ENCODE measurements at regions of chr10 and their contacts with region 1.

Region 1: GRCh38 chr10:29535012-29535777 is 99.6 kb downstream of the SVIL start:
- DNase-seq: peak; percentile 69
- H3K4me3 ChIP-seq: peak overlapping the region; percentile 40
- CTCF ChIP-seq: peak; percentile 86

Region 2: DNA sequence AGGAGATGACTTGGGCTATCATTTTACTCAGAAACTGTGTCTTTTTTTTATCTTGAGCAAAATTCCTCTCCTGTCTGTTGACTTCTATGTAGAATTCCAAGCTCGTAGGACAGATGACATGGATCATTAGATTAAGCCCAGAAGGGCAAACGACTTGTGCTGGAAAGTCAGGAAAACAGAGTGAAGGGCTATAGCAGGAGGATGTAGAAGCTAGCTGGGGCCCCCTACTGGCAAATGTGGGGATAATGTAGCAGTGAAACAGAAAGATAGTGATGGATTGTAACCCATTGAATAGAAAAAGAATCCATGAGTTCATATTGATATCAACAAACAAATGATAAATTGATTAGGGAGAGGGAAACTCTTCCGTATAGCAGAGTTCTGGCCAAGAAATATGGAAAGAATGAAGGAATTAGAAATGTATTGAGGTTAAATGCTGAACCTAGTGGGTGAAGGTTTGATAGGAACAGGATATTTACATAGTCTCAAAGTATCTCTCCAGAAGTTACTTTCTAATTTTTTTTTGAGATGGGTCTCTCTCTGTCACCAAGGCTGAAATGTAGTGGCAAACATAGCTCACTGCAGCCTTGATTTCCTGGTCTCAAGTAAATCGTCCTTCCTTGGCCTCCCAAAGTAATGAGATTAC is 142.7 kb before region 1 on chr10:
- CTCF ChIA-PET with region 1: no interaction called
- POLR2A ChIA-PET with region 1: no interaction called
- DNase-seq: no peak
- H3K4me3 ChIP-seq: no peak overlapping the region
- CTCF ChIP-seq: peak; percentile 65

Region 3: GRCh38 chr10:29508554-29509244 is 26.5 kb before region 1 on chr10:
- CTCF ChIA-PET with region 1: interaction called, 45 read pairs
- POLR2A ChIA-PET with region 1: no interaction called
- DNase-seq: no peak
- H3K4me3 ChIP-seq: no peak overlapping the region
- CTCF ChIP-seq: no peak

Region 4: GRCh38 chr10:29517352-29517923 is 17.8 kb before region 1 on chr10:
- CTCF ChIA-PET with region 1: interaction called, 58 read pairs
- POLR2A ChIA-PET with region 1: no interaction called
- DNase-seq: no peak
- H3K4me3 ChIP-seq: no peak overlapping the region
- CTCF ChIP-seq: peak; percentile 52

Region 5: DNA sequence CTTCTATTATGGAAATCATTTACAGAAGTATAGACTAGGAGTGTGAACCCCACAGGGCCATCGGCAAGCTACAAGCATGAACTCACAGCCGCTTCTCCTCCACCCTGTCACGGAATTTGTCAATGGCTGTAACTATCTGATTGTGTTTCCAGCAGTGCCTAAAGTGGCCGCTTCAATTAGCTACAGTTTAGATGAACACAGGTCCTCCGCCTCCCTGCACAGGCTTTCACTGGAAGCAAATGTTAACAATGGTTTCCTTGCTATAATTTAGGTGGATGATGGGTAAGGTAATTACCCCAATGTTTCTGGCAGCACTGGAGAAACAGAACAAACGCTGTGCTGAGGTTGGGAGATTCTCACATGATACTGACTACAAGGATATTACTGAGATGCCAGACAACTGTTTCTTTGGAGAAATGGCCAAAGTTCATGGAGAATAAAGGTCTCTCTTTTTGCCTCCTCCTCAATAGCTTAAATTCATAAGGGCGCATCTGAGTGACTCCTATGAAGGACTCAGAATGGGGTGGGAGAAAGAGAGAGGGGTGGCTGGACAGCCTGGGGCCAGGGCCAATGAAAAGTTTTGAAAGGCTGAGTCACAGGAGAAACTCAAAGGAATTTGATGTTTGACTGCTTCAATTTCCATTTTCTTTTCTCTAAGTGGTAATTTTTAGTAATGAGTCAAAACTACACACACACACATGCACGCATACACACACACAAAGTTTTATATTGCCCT is 20.7 kb after region 1 on chr10:
- CTCF ChIA-PET with region 1: interaction called, 26 read pairs
- POLR2A ChIA-PET with region 1: no interaction called
- DNase-seq: peak; percentile 51
- H3K4me3 ChIP-seq: no peak overlapping the region
- CTCF ChIP-seq: no peak

Region 6: GRCh38 chr10:29569795-29570194 is 34.6 kb after region 1 on chr10:
- CTCF ChIA-PET with region 1: interaction called, 10 read pairs
- POLR2A ChIA-PET with region 1: no interaction called
- DNase-seq: no peak
- H3K4me3 ChIP-seq: no peak overlapping the region
- CTCF ChIP-seq: no peak

Region 7: DNA sequence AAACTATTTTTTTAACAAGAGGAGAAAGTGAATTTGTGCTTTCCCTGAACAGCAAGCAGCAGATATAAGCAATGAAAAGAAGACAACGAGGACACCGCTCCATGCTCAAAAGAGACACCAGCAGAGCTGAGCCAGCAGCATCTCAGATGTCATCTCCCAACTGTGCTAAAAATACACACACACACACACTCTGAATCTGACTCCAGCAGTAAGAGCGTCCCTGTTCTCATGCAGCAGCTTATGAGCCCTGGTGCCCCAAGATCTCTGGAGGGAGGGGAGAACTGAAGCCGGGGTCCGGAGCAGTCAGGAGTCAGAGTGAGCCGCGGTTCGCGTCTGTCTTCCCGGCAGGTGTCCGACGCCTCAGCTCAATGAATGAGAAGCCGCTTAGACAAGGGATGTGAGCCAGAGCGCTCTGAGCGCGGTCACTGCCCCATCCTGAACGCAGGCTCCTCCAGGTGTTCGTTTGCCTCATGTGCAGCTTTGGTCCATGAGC is 50.3 kb after region 1 on chr10:
- CTCF ChIA-PET with region 1: interaction called, 10 read pairs
- POLR2A ChIA-PET with region 1: no interaction called
- DNase-seq: no peak
- H3K4me3 ChIP-seq: no peak overlapping the region
- CTCF ChIP-seq: no peak